HEK293 (cell line): ENCODE measurements at regions of chr19 and their contacts with region 1.

Region 1: GRCh38 chr19:55385740-55386529 is at the start of gene RPL28:
- H3K4me3 ChIP-seq: peak within 1 kb of the TSS; percentile 94
- H3K27ac ChIP-seq: peak within 1 kb of the TSS; percentile 84
- H3K4me1 ChIP-seq: peaks cover 27% of the 10 kb centered on the region
- CTCF ChIP-seq: 0 out of 2 replicates have a peak, but pooled peaks have one; percentile 31

Region 2: DNA sequence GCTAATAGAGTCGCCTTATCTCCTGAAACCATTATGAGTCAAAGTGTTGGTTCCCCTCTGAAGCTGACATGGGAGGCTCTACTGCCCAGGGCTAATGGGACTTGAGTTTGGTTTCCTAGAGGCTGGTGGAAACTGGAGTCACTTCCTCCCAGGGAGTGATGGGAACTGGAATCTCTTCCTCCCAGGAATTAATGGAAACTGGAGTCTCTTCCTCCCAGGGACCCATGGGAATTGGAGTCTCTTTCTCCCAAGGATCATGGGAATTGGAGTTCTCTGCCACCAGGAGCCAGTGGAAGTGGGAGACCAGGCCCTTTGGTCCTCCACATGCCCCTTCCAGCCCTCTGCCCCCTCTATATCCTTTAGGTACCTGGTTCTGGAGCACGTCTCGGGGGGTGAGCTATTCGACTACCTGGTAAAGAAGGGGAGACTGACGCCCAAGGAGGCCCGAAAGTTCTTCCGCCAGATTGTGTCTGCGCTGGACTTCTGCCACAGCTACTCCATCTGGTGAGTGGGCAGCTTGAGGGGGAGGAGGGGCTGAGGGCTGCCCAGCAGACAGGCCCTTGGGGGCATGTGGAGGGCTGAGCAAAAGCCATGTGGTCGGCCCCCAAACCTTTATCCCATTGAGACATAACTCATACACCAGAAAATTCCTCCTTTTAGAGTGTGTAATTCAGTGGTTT is 96.7 kb before region 1 on chr19:
- CTCF ChIA-PET with region 1: interaction called, 16 read pairs
- POLR2A ChIA-PET with region 1: no interaction called
- H3K4me3 ChIP-seq: no peak overlapping the region
- H3K27ac ChIP-seq: no peak overlapping the region
- H3K4me1 ChIP-seq: no peaks in the 10 kb centered on the region
- CTCF ChIP-seq: no peak

Region 3: GRCh38 chr19:55398200-55398925 is 12.4 kb after region 1 on chr19:
- CTCF ChIA-PET with region 1: no interaction called
- POLR2A ChIA-PET with region 1: interaction called, 62 read pairs
- H3K4me3 ChIP-seq: no peak overlapping the region
- H3K27ac ChIP-seq: no peak overlapping the region
- H3K4me1 ChIP-seq: no peaks in the 10 kb centered on the region; the same call in 1 of the 2 replicates
- CTCF ChIP-seq: no peak

Region 4: GRCh38 chr19:55923556-55923955 is 537.6 kb after region 1 on chr19:
- CTCF ChIA-PET with region 1: no interaction called
- POLR2A ChIA-PET with region 1: no interaction called
- H3K4me3 ChIP-seq: no peak overlapping the region
- H3K27ac ChIP-seq: no peak overlapping the region
- H3K4me1 ChIP-seq: no peaks in the 10 kb centered on the region
- CTCF ChIP-seq: no peak